ENCODE measurements at regions of chr15 and their contacts with region 1.

Region 1: DNA sequence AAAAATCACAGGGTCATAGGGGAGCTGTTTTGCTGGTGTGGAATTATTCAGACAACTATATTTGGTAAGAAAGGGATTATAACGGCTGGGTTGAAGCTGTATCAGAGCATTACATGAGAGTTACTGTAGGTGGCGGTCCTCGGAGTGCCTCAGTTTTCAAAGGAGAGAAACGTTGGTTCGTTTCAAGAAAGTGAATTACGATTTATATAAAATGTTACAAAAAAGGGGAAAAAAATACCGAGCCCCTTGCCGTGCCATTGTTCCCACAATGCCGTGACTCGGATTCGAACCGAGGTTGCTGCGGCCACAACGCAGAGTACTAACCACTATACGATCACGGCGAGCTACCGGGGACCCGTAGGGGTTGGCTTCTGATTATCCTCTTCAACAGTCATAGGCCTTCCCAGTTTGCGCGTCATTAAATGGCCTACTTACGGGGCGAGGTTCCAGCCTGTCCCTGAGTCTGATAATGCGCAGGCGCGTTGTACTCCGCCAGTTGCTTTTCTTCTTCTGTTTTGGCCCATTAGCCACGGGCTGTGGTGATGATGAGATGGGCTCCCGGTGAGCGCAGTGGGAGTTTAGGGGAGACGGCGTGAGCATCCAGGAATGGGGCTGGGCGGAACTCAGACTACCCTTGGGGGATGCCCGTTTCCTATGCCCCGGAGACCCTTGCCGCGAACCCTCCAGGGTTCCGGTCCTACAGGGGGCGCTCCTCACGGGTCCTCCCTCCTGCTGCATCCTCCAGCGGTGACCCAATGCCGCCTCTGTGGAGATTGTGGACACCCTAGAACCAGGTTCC is 10.8 kb upstream of the SHF start:
- DNase-seq: peak; percentile 88 to 94
- H3K4me3 ChIP-seq: peak overlapping the region; percentile 80
- H3K27ac ChIP-seq: no peak overlapping the region
- H3K4me1 ChIP-seq: no peaks in the 10 kb centered on the region
- H3K27me3 ChIP-seq: no peaks in the 10 kb centered on the region
- CTCF ChIP-seq: peak; percentile 77

Region 2: DNA sequence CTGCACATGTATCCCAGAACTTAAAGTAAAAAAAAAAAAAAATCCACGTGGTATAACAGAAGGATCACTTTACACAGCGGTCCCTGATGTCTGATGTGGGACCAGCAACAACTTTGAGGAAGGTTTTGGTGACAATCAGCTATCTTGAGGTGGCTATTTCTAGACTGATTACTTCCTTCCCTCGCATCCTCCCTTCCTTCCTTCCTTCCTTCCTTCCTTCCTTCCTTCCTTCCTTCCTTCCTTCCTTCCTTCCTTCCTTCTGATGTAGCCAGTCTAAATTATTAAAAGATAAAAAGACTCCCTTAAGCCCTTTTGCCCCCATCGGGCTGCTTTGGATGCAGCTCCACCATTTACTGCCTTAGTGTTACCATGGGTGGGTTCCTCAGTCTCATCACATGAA is 160.6 kb before region 1 on chr15:
- CTCF ChIA-PET with region 1: no interaction called
- POLR2A ChIA-PET with region 1: interaction called, 12 read pairs
- intact Hi-C with region 1: no loop called
- DNase-seq: no peak
- H3K4me3 ChIP-seq: no peak overlapping the region
- H3K27ac ChIP-seq: no peak overlapping the region
- H3K4me1 ChIP-seq: no peaks in the 10 kb centered on the region
- H3K27me3 ChIP-seq: no peaks in the 10 kb centered on the region
- CTCF ChIP-seq: no peak

Region 3: DNA sequence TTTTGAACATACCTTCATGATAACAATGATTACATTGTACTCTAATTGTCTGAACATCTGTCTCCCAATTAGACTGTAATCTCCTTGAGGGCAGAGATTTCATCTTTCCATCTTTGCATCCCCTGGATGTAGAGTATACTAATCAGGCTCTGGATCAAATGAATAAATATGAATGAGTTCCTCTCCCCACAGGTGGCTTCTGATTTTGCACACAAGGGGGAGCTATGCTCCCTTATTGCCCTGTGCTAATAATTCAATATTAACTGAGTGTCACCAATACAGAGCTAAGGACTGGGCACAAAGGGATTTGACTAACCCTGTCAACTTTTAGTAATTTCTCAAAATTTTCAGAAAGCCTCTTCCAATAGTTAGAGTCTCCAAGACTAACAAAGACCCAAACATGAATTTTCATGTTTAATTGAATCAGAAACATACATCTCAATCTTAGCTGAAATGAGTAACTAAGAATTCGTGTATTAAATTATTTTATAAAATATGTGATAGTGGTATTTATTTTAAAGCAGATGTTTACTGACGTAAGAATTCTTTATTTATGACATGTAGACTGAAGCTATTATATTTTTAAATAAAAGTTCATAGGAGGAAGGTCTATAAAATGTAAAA is 71.9 kb before region 1 on chr15:
- CTCF ChIA-PET with region 1: interaction called, 9 read pairs
- POLR2A ChIA-PET with region 1: no interaction called
- intact Hi-C with region 1: loop called (anchors 2 kb)
- DNase-seq: peak in 1 of 2 experiments; percentile 45
- H3K4me3 ChIP-seq: no peak overlapping the region
- H3K27ac ChIP-seq: no peak overlapping the region
- H3K4me1 ChIP-seq: peaks cover 11% of the 10 kb centered on the region; the same call in 1 of the 2 replicates
- H3K27me3 ChIP-seq: no peaks in the 10 kb centered on the region
- CTCF ChIP-seq: peak; percentile 78

Region 4: GRCh38 chr15:45268135-45268534 is 69.6 kb after region 1 on chr15:
- CTCF ChIA-PET with region 1: no interaction called
- POLR2A ChIA-PET with region 1: no interaction called
- intact Hi-C with region 1: no loop called
- DNase-seq: peak in 1 of 2 experiments; percentile 7
- H3K4me3 ChIP-seq: no peak overlapping the region
- H3K27ac ChIP-seq: no peak overlapping the region
- H3K4me1 ChIP-seq: no peaks in the 10 kb centered on the region
- H3K27me3 ChIP-seq: no peaks in the 10 kb centered on the region
- CTCF ChIP-seq: peak; percentile 33; the same call in 1 of the 2 replicates

Region 5: GRCh38 chr15:45279024-45279698 is 80.6 kb after region 1 on chr15:
- CTCF ChIA-PET with region 1: no interaction called
- POLR2A ChIA-PET with region 1: interaction called, 12 read pairs
- intact Hi-C with region 1: loop called (anchors 1 kb)
- DNase-seq: peak; percentile 92 to 98
- H3K4me3 ChIP-seq: peak overlapping the region; percentile 67
- H3K27ac ChIP-seq: no peak overlapping the region
- H3K4me1 ChIP-seq: no peaks in the 10 kb centered on the region; the same call in 1 of the 2 replicates
- H3K27me3 ChIP-seq: no peaks in the 10 kb centered on the region
- CTCF ChIP-seq: no peak

Region 6: DNA sequence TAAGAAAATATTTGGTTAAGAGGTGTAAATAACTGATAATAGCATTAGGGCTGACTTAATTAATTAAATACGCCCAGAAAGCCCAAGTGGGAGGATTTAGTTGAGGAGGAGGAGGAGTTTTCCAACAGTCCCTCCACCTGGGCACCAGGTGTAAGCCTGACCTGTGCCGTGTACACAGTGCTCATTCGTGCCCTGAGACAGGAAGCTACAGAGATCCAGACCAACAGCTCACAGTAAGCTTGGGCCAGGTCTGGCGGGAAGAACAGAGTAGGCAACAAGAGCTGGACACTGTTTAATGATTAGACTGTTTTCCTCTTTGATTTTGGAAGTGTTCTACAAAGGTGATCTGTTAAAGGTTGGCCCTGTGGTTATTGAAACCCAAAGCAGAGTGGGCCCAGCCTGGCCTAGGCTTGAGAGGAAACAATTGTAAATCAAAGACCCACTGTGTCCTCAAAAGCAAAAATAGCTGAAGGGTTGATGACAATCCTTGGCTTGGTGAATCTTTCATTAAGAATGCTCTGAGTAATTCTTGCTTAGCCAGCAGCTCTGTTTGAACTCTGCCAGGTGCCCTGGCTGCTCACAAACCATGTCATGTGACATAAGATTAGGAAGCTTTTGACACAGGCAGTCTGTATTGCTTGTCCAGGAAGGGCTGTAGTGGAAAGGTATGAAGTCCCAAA is 450.1 kb after region 1 on chr15:
- CTCF ChIA-PET with region 1: no interaction called
- POLR2A ChIA-PET with region 1: interaction called, 10 read pairs
- intact Hi-C with region 1: no loop called
- DNase-seq: peak; percentile 37 to 77
- H3K4me3 ChIP-seq: no peak overlapping the region
- H3K27ac ChIP-seq: peak overlapping the region; percentile 60
- H3K4me1 ChIP-seq: peaks cover 27% of the 10 kb centered on the region
- H3K27me3 ChIP-seq: no peaks in the 10 kb centered on the region
- CTCF ChIP-seq: no peak

Measured in PC-9 (cell line).